ENCODE measurements at regions of chr11 and their contacts with region 1.

Region 1: DNA sequence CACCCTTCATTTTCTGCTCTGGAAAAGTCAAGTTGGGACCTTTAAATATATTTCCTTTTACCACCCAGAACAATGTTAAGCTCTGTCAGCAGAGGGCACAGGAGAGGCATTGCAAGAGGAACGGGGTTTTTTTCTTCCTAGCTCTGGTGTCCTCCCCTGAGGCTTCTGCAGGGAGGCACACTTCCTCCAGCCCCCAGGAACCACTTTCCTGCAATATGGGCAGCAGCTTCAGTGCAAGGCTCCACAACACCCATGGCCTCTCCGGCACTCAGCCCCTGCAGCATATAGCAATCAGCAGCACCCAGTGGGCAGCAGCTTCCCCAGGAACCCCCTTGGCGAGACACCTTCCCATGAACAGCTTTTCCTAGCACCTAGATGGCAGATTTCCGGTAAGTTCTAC is 101.4 kb downstream of the SYT9 start:
- DNase-seq: peak; percentile 23
- ATAC-seq: peak; percentile 62
- H3K4me3 Mint-ChIP-seq: no peak overlapping the region
- H3K27ac Mint-ChIP-seq: no peak overlapping the region
- H3K4me1 Mint-ChIP-seq: peaks cover 3% of the 10 kb centered on the region
- H3K27me3 Mint-ChIP-seq: peaks cover 7% of the 10 kb centered on the region
- CTCF ChIP-seq: no peak

Region 2: GRCh38 chr11:7548659-7549274 is 195.7 kb after region 1 on chr11:
- CTCF ChIA-PET with region 1: interaction called, 7 read pairs
- POLR2A ChIA-PET with region 1: no interaction called
- intact Hi-C with region 1: loop called (anchors 1 kb)
- DNase-seq: no peak
- ATAC-seq: peak; percentile 89
- H3K4me3 Mint-ChIP-seq: no peak overlapping the region
- H3K27ac Mint-ChIP-seq: no peak overlapping the region
- H3K4me1 Mint-ChIP-seq: peaks cover 10% of the 10 kb centered on the region
- H3K27me3 Mint-ChIP-seq: no peaks in the 10 kb centered on the region
- CTCF ChIP-seq: no peak

Region 3: GRCh38 chr11:7657306-7658025 is 304.4 kb after region 1 on chr11:
- CTCF ChIA-PET with region 1: interaction called, 18 read pairs
- POLR2A ChIA-PET with region 1: no interaction called
- intact Hi-C with region 1: loop called (anchors 2 kb)
- DNase-seq: no peak
- ATAC-seq: peak; percentile 47
- H3K4me3 Mint-ChIP-seq: no peak overlapping the region
- H3K27ac Mint-ChIP-seq: no peak overlapping the region
- H3K4me1 Mint-ChIP-seq: no peaks in the 10 kb centered on the region
- H3K27me3 Mint-ChIP-seq: no peaks in the 10 kb centered on the region
- CTCF ChIP-seq: no peak

Region 4: GRCh38 chr11:7665473-7666291 is 312.6 kb after region 1 on chr11:
- CTCF ChIA-PET with region 1: interaction called, 29 read pairs
- POLR2A ChIA-PET with region 1: interaction called, 4 read pairs
- intact Hi-C with region 1: loop called (anchors 1 kb)
- DNase-seq: peak; percentile 75
- ATAC-seq: peak; percentile 99
- H3K4me3 Mint-ChIP-seq: no peak overlapping the region
- H3K27ac Mint-ChIP-seq: no peak overlapping the region
- H3K4me1 Mint-ChIP-seq: peaks cover 5% of the 10 kb centered on the region
- H3K27me3 Mint-ChIP-seq: no peaks in the 10 kb centered on the region
- CTCF ChIP-seq: peak; percentile 51